GM10248 (cell line): ENCODE measurements at regions of chr22 and their contacts with region 1.

Region 1: GRCh38 chr22:40939202-40939601 is 12.0 kb upstream of the RBX1 start:
- DNase-seq: no peak
- CTCF ChIP-seq: no peak

Region 2: DNA sequence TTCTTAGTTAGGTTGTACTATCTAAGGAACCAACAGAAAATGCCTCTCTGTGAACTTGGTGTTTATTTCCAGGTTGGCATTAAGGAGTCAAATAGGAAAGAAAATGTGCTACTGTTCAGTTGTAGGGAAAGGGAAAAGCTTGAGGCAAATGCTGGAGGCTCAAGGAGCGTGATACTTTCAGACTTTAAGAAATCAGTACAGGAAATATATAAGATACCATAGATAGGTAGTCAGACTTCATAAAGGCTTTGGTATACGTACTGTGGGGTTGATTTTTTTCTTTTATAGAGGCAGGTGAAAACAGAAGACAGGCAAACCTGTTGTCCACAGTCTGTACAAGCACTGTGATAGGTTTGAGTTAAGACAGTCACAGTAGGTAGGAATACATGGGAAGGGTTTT is 183.9 kb after region 1 on chr22:
- CTCF ChIA-PET with region 1: no interaction called
- POLR2A ChIA-PET with region 1: interaction called, 11 read pairs
- DNase-seq: no peak
- CTCF ChIP-seq: no peak